MCF 10A (cell line): ENCODE measurements at regions of chr2 and their contacts with region 1.

Region 1: DNA sequence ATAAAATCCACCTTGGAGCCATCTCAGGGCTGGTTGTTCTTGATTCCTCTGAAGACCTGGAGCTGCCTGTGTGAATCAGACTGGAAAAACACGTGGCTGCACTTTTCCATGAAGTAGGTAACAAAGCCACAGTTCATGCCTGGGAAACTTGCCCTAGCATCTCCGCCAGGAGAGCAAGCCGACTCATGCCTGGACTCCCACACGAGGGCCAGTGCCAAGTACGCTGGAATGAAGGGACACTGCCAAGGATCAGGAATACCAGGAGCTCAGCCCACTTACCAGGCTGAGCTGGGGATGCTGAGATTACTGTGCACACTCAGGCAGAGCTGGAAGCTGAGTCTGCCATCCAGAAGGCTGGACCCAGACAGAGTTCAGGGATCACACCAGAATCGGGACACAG is 10.9 kb upstream of the FHL2 start:
- DNase-seq: peak; percentile 99
- H3K4me3 Mint-ChIP-seq: peak overlapping the region; percentile 36
- H3K27ac Mint-ChIP-seq: no peak overlapping the region
- H3K4me1 Mint-ChIP-seq: peaks cover 42% of the 10 kb centered on the region
- H3K27me3 Mint-ChIP-seq: no peaks in the 10 kb centered on the region
- CTCF ChIP-seq: no peak

Region 2: GRCh38 chr2:105194022-105194675 is 215.6 kb before region 1 on chr2:
- CTCF ChIA-PET with region 1: no interaction called
- POLR2A ChIA-PET with region 1: no interaction called
- intact Hi-C with region 1: no loop called
- DNase-seq: no peak
- H3K4me3 Mint-ChIP-seq: no peak overlapping the region
- H3K27ac Mint-ChIP-seq: no peak overlapping the region
- H3K4me1 Mint-ChIP-seq: no peaks in the 10 kb centered on the region
- H3K27me3 Mint-ChIP-seq: peaks cover 36% of the 10 kb centered on the region
- CTCF ChIP-seq: no peak

Region 3: DNA sequence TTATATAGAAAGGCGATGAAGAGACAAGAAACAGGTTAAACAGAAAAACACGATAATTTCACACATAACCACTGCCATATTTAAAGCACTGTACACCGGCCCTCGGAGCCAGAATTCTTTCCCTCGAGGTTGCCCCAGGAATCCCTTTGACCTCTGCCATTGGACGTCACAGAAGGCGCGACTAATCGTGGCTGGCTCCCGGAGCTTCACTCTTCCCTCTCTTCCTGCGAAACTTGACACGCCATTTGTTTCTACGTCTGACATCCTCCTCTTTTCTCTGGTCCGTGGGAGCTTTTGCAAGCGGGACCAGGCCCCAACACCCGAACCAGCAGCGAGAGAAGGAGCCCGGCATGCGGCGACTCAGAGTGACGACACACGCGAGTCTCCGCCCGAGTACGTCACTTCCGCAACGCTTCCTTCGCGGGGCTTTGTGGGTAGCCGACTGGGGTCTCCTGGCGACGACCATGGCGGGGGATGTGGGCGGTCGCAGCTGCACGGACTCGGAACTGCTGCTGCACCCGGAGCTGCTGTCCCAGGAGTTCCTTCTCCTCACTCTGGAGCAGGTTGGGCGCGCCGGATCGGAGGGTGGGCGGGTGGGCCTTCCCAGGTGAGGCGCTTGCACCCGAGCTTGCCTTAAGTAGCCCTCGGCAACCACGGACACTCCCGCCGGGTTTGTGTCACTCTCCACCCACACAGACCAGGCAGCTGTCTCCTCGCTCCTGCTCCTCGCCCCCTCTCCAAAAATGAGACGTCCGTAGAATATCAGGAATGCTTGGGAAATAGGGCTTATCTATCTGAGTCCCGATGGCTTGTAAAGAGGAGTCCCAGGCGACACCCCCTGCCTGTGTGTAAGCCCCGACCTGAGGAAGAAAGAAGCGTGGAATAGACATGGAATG is 72.3 kb before region 1 on chr2 and contains the start of gene C2orf49:
- CTCF ChIA-PET with region 1: interaction called, 6 read pairs
- POLR2A ChIA-PET with region 1: interaction called, 10 read pairs
- intact Hi-C with region 1: no loop called
- DNase-seq: peak; percentile 86
- H3K4me3 Mint-ChIP-seq: peak within 1 kb of the TSS; percentile 86
- H3K27ac Mint-ChIP-seq: peak within 1 kb of the TSS; percentile 100
- H3K4me1 Mint-ChIP-seq: peaks cover 13% of the 10 kb centered on the region
- H3K27me3 Mint-ChIP-seq: no peaks in the 10 kb centered on the region
- CTCF ChIP-seq: no peak
- total RNA-seq, gene C2orf49: 24.2 and 24.5 TPM in 2 replicates

Region 4: DNA sequence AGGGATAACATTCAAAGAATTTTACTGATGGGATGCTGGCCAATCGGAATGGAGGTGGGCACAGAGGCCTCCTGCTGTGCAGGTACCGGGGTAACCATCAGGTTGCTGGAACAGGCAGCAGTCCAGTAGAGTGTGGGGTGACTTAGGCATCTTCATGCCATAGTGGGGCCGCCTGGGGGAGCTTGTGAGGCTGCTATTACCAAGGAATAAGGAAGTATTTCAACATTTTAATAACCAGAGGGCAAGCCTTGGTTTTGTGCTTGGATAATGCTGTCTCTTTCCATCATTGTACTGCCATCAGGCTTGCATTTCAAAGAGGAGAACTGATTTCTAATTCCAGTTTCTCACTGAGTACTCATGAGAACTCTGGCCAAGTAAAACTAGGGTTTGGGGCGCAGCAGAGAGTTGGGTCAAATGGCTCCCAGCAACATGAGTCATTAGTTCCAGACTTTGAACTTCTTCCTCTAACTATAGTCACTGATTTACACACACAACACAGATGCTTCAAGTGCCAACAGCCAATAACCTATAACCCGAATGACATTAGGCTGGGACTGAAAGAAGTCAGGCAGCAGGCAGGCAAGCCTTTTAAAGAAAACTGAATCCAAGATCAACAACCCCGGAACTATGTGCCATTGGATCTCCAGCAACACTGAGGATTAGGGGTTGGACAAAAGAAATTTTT is 45.2 kb after region 1 on chr2:
- CTCF ChIA-PET with region 1: interaction called, 9 read pairs
- POLR2A ChIA-PET with region 1: interaction called, 37 read pairs
- intact Hi-C with region 1: loop called (anchors 1 kb)
- DNase-seq: peak; percentile 95
- H3K4me3 Mint-ChIP-seq: peak overlapping the region; percentile 15
- H3K27ac Mint-ChIP-seq: peak overlapping the region; percentile 91
- H3K4me1 Mint-ChIP-seq: peaks cover 28% of the 10 kb centered on the region
- H3K27me3 Mint-ChIP-seq: no peaks in the 10 kb centered on the region
- CTCF ChIP-seq: peak; percentile 68

Region 5: GRCh38 chr2:105744091-105744908 is 334.6 kb after region 1 on chr2:
- CTCF ChIA-PET with region 1: no interaction called
- POLR2A ChIA-PET with region 1: no interaction called
- intact Hi-C with region 1: no loop called
- DNase-seq: peak; percentile 52
- H3K4me3 Mint-ChIP-seq: peak overlapping the region; percentile 79
- H3K27ac Mint-ChIP-seq: peak overlapping the region; percentile 58
- H3K4me1 Mint-ChIP-seq: peaks cover 22% of the 10 kb centered on the region
- H3K27me3 Mint-ChIP-seq: no peaks in the 10 kb centered on the region
- CTCF ChIP-seq: no peak

Region 6: DNA sequence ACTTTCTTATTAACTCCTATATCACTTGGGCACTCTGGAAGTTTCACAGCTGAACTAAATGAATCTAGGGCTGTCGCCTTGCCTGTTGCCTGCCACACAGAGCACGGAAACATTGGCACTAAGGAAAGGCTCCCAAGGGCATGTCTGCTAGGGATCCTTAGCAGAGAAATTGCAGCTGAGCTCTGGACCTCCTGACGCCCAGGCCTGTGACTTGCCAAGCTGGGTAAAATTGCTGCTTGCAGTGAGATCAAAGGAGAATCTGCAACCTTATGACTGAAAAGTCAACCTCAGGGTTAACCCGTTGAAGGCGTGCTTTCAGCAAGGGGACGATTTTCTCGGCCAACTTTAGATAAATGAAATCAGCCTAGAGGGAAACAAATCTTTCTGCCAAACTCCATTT is 524.8 kb after region 1 on chr2:
- CTCF ChIA-PET with region 1: no interaction called
- POLR2A ChIA-PET with region 1: no interaction called
- intact Hi-C with region 1: no loop called
- DNase-seq: no peak
- H3K4me3 Mint-ChIP-seq: no peak overlapping the region
- H3K27ac Mint-ChIP-seq: no peak overlapping the region
- H3K4me1 Mint-ChIP-seq: no peaks in the 10 kb centered on the region
- H3K27me3 Mint-ChIP-seq: no peaks in the 10 kb centered on the region
- CTCF ChIP-seq: no peak